Mammary epithelial cell (primary cell): ENCODE measurements at regions of chr11 and their contacts with region 1.

Region 1: DNA sequence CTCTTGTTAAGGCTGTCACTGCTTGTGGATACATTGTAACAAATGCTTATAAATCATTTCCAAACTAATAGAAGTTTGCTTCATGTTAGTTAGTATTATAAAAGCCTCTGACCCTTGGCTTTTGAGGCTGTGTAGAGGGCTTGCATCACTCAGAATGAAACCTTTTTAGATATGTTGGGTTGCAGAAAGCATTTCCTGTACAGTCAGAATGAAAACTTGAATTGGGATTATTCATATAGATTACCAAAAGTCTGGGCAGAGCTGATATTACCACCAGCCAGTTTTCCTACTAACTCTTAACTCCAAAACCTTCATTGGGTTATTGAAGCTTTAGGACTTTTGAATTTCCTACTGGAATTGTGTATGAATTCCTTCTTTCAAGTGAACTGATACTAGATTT is 12.0 kb downstream of the KMT2A start:
- DNase-seq: peak; percentile 33
- H3K4me3 ChIP-seq: no peak overlapping the region
- H3K27ac ChIP-seq: no peak overlapping the region
- H3K4me1 ChIP-seq: no peaks in the 10 kb centered on the region
- H3K27me3 ChIP-seq: no peaks in the 10 kb centered on the region
- CTCF ChIP-seq: no peak

Region 2: GRCh38 chr11:118338637-118339061 is 109.6 kb before region 1 on chr11:
- CTCF ChIA-PET with region 1: no interaction called
- dilution Hi-C with region 1: no loop called
- in situ Hi-C with region 1: no loop called
- intact Hi-C with region 1: no loop called
- DNase-seq: peak; percentile 2
- H3K4me3 ChIP-seq: no peak overlapping the region
- H3K27ac ChIP-seq: no peak overlapping the region
- H3K4me1 ChIP-seq: no peaks in the 10 kb centered on the region
- H3K27me3 ChIP-seq: no peaks in the 10 kb centered on the region
- CTCF ChIP-seq: no peak

Region 3: DNA sequence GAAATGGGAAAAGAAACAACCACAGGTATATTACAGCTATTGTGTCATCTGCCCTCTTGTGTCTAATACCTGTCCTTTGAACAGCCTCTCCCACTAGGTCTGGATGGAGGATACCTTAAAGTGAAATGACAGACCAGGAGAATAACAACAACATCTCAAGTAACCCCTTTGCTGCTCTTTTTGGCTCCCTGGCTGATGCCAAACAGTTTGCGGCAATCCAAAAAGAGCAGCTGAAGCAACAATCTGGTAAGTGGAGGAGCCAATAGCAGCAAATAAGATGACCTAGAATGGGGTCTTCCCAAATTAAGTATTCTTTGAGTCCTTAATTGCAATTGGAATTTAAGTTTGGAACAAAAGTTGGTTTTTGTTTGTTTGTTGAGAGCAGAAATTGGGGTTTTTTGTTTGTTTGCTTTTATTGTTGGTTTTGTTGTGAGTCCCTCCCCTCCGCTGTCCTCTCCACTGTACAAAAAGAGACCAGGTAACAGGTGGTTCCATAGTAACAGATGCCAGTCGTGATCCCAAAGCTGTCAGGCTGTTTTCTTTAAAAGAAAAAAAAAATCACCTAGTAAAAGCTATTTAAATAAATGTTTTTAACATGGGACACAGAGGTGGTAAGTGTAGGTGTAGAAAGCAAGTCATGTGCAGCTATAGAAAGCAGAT is 83.2 kb before region 1 on chr11:
- CTCF ChIA-PET with region 1: no interaction called
- dilution Hi-C with region 1: loop called (anchors 5 kb)
- in situ Hi-C with region 1: no loop called
- intact Hi-C with region 1: no loop called
- DNase-seq: no peak
- H3K4me3 ChIP-seq: no peak overlapping the region
- H3K27ac ChIP-seq: no peak overlapping the region
- H3K4me1 ChIP-seq: peaks cover 8% of the 10 kb centered on the region
- H3K27me3 ChIP-seq: no peaks in the 10 kb centered on the region
- CTCF ChIP-seq: no peak

Region 4: DNA sequence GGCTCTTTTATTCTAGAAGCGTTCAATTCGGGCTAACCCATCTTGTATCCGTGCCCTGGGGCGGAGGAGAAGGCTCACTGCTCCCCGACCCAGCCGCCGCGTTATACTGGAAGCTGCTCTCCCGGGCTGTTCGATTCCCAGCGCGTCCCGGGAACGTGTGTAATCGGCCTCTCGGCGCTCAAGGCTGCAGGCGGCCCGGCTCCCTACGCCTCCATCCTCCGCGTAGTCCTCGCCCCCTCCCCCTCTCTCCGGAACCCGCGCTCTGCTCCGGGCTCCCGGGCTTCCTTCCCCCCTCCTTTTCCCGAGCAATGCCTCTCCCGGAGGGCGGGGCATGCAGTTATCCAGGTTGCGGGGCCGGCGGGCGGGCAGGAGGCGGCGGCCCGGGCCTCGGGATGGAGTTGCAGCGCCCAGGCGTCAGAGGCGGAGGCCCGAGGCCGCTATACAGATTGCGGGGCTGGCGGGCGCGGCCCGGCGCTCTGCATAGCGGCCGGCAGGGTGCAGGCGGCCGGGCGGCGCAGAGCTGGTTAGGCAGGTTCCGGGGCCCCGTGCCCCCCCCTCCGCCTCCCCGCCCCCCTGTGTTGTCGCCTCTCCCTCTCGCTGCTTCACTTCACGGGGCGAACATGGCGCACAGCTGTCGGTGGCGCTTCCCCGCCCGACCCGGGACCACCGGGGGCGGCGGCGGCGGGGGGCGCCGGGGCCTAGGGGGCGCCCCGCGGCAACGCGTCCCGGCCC is 12.2 kb before region 1 on chr11 and contains the start of gene KMT2A:
- CTCF ChIA-PET with region 1: no interaction called
- dilution Hi-C with region 1: no loop called
- in situ Hi-C with region 1: no loop called
- intact Hi-C with region 1: loop called (anchors 1 kb)
- DNase-seq: peak; percentile 99
- H3K4me3 ChIP-seq: peak within 1 kb of the TSS; percentile 84 to 95 (median 88)
- H3K27ac ChIP-seq: peak within 1 kb of the TSS; percentile 42
- H3K4me1 ChIP-seq: peaks cover 25% of the 10 kb centered on the region
- H3K27me3 ChIP-seq: no peaks in the 10 kb centered on the region
- CTCF ChIP-seq: no peak
- total RNA-seq, gene KMT2A: 35.7 to 55.2 TPM

Region 5: GRCh38 chr11:118652681-118653181 is 204.4 kb after region 1 on chr11:
- CTCF ChIA-PET with region 1: no interaction called
- dilution Hi-C with region 1: no loop called
- in situ Hi-C with region 1: no loop called
- intact Hi-C with region 1: no loop called
- DNase-seq: no peak
- H3K4me3 ChIP-seq: no peak overlapping the region
- H3K27ac ChIP-seq: no peak overlapping the region
- H3K4me1 ChIP-seq: no peaks in the 10 kb centered on the region
- H3K27me3 ChIP-seq: no peaks in the 10 kb centered on the region
- CTCF ChIP-seq: no peak